ENCODE measurements at regions of chr9 and their contacts with region 1.

Region 1: DNA sequence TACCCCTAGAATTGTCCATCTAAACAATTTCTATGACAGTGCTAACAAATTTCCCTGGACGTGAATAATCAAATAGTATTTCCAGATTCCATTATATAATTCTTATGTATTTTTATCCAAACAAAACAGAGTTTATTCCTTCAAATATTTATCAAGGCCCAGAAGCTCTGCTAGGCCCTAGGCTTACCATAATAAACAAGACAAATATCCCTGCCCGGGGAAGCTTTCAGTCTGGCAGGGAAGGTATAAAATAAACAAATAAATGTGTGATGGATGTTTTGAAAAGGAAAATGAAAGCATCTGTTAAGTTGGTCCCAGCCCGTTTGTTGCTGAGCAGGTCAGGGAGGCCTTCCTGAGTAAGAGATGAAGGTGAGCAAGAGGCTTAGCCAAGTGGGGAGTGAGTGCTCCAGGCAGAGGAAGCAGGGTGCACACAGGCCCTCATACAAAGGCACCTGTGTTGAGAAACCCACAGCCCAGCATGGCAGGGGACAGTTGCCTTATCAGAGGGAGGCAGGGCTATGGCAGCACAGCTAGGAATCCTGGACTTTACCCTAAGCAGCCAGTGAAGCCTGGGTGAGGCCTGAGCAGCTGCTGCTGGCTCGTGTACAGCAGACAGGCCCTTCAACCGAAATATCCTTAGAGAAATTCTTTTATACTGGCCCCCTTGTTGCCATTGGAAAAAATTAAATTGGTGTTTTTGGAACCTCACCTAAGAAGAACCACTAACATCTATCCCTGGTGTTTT is 7.7 kb upstream of the SLC35D2 start:
- DNase-seq: peak; percentile 96
- ATAC-seq: peak; percentile 99
- H3K4me3 ChIP-seq: no peak overlapping the region
- H3K27ac ChIP-seq: peak overlapping the region; percentile 96
- H3K4me1 ChIP-seq: peaks cover 67% of the 10 kb centered on the region
- H3K27me3 ChIP-seq: no peaks in the 10 kb centered on the region; a peak in 1 of 5 replicates
- CTCF ChIP-seq: no peak
- EP300 ChIP-seq: peak; percentile 77 to 83
- POLR2A ChIP-seq: peak; percentile 71 to 91
- RAD21 ChIP-seq: peak; percentile 75

Region 2: GRCh38 chr9:96136992-96137670 is 254.1 kb before region 1 on chr9:
- CTCF ChIA-PET with region 1: no interaction called
- POLR2A ChIA-PET with region 1: no interaction called
- in situ Hi-C with region 1: no loop called
- intact Hi-C with region 1: no loop called
- DNase-seq: no peak
- ATAC-seq: peak; percentile 84
- H3K4me3 ChIP-seq: peak overlapping the region; percentile 20 to 45 (median 44); a peak in 3 of 6 replicates
- H3K27ac ChIP-seq: no peak overlapping the region
- H3K4me1 ChIP-seq: peaks cover 29% of the 10 kb centered on the region
- H3K27me3 ChIP-seq: peaks cover 0 to 31% of the 10 kb centered on the region in 2 experiments; a peak in 4 of 5 replicates
- CTCF ChIP-seq: no peak
- EP300 ChIP-seq: no peak
- POLR2A ChIP-seq: no peak
- RAD21 ChIP-seq: no peak

Region 3: GRCh38 chr9:96203867-96204501 is 187.2 kb before region 1 on chr9:
- CTCF ChIA-PET with region 1: no interaction called
- POLR2A ChIA-PET with region 1: no interaction called
- in situ Hi-C with region 1: no loop called
- intact Hi-C with region 1: no loop called
- DNase-seq: no peak
- ATAC-seq: no peak
- H3K4me3 ChIP-seq: no peak overlapping the region
- H3K27ac ChIP-seq: no peak overlapping the region
- H3K4me1 ChIP-seq: no peaks in the 10 kb centered on the region
- H3K27me3 ChIP-seq: peaks cover 1 to 41% of the 10 kb centered on the region in 2 experiments; a peak in 4 of 5 replicates
- CTCF ChIP-seq: no peak
- EP300 ChIP-seq: no peak
- POLR2A ChIP-seq: no peak
- RAD21 ChIP-seq: no peak

Region 4: GRCh38 chr9:96256800-96257199 is 134.4 kb before region 1 on chr9:
- CTCF ChIA-PET with region 1: no interaction called
- POLR2A ChIA-PET with region 1: no interaction called
- in situ Hi-C with region 1: no loop called
- intact Hi-C with region 1: no loop called
- DNase-seq: peak; percentile 12
- ATAC-seq: no peak
- H3K4me3 ChIP-seq: no peak overlapping the region
- H3K27ac ChIP-seq: no peak overlapping the region
- H3K4me1 ChIP-seq: no peaks in the 10 kb centered on the region
- H3K27me3 ChIP-seq: no peaks in the 10 kb centered on the region; a peak in 1 of 5 replicates
- CTCF ChIP-seq: no peak
- EP300 ChIP-seq: no peak
- POLR2A ChIP-seq: no peak
- RAD21 ChIP-seq: no peak

Region 5: DNA sequence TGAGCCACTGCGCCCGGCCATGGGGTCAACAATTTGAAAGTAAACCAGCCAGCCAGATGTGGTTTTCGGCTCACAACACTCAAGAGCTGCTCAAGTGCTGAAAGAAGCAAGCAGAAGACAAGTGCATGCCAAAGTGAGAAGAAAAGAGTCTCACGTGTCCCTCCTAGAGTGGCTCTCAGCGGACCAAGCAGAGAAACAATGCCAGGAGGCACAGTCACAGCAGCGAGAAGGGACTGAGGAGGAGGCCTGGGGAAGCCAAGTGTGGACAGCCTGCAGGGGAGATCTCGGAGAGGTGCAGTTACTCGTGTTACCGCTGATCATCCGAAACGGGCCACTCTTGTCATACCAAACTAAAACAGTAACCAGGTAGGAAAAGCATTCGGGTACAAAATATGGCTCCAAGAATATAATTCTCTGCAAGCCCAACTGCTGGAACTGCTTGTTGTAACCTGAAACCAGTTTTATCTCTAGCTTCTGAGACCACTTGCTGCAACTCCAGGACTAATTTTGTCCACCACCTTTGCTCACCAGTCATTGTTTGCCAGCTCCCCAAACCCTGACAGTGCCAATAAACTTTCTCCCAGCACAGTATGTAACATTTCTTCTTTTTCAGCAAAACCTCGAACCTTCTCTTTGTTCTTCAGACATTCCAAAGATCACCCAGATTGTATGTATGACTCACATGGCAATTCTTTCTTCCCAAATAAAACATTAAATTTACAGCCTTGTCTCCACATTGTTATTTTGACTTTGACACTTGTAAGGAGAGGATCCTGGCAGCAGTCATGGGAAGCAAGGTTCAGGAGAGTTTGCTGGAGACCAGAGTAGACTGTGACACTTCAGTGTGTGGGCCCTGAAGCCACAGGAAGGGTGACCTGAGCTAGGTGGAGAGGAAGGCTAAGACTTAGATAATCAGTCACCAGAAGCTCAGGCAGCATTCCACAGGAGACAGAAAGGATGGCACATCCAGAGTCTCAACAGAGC is 14.0 kb before region 1 on chr9:
- CTCF ChIA-PET with region 1: no interaction called
- POLR2A ChIA-PET with region 1: interaction called, 25 read pairs
- in situ Hi-C with region 1: no loop called
- intact Hi-C with region 1: no loop called
- DNase-seq: peak; percentile 39
- ATAC-seq: peak; percentile 53
- H3K4me3 ChIP-seq: 0 out of 6 replicates have a peak overlapping the region, but pooled peaks of 1 of the 3 experiments have one; percentile 1
- H3K27ac ChIP-seq: peak overlapping the region; percentile 51
- H3K4me1 ChIP-seq: peaks cover 71% of the 10 kb centered on the region
- H3K27me3 ChIP-seq: no peaks in the 10 kb centered on the region
- CTCF ChIP-seq: no peak
- EP300 ChIP-seq: 0 out of 4 replicates have a peak, but pooled peaks of 1 of the 2 experiments have one; percentile 23
- POLR2A ChIP-seq: no peak
- RAD21 ChIP-seq: no peak

Region 6: GRCh38 chr9:96418074-96418809 is 27.0 kb after region 1 on chr9 and contains the start of gene ZNF367:
- CTCF ChIA-PET with region 1: no interaction called
- POLR2A ChIA-PET with region 1: interaction called, 12 read pairs
- in situ Hi-C with region 1: no loop called
- intact Hi-C with region 1: loop called (anchors 2 kb)
- DNase-seq: peak; percentile 95
- ATAC-seq: peak; percentile 81
- H3K4me3 ChIP-seq: peak within 1 kb of the TSS; percentile 84 to 89 (median 88)
- H3K27ac ChIP-seq: peak within 1 kb of the TSS; percentile 99
- H3K4me1 ChIP-seq: peaks cover 58% of the 10 kb centered on the region
- H3K27me3 ChIP-seq: no peaks in the 10 kb centered on the region; a peak in 1 of 5 replicates
- CTCF ChIP-seq: no peak
- EP300 ChIP-seq: no peak; a peak in 1 of 4 replicates
- POLR2A ChIP-seq: peak; percentile 67
- RAD21 ChIP-seq: peak; percentile 20; the same call in 1 of the 2 replicates
- total RNA-seq, gene ZNF367: 7.7 and 8.1 TPM in 2 replicates

Measured in HepG2 (cell line).